Activated CD8-positive, alpha-beta T cell treated with anti-CD3 and anti-CD28 coated beads, Interleukin-2, amount 10 ng/mL, durations not matched to agents 7 days and 5 days (primary cell): ENCODE measurements at regions of chr6 and their contacts with region 1.

Region 1: DNA sequence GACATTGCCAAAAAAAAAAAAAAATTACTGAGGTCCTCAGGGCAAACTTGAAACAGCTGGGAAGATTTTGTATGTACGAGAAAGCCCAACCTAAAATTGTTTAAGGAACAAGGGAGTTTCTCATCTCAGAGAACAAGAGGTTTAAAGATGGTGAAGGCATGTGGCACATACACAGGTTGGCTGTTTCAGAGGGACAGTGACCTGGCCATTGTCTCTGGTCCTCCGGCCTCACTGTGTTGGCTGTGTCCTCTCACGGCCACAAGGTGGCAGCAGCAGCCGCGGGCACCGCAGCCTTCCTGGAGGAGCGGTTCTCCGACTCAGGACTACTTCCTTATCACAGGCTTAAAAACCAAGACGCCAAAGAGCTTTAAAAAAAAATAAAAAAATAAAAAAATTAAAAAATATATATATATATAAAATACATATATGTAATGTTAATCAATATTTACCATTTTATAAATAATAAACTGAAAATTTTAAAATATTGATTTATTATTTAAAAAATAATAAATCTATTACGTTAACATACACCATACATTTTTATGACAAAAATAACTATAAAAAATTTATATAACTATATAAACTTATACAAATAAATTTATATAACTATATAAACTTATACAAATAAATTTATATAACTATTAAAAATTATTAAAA is 52.8 kb downstream of the GTF2H5 start:
- DNase-seq: peak; percentile 82
- ATAC-seq: peak; percentile 94
- H3K4me3 Mint-ChIP-seq: no peak overlapping the region
- H3K27ac Mint-ChIP-seq: no peak overlapping the region
- H3K4me1 Mint-ChIP-seq: peaks cover 6% of the 10 kb centered on the region
- H3K27me3 Mint-ChIP-seq: no peaks in the 10 kb centered on the region

Region 2: GRCh38 chr6:157873735-157874344 is 347.1 kb before region 1 on chr6:
- CTCF ChIA-PET with region 1: no interaction called
- POLR2A ChIA-PET with region 1: no interaction called
- DNase-seq: peak; percentile 91
- ATAC-seq: peak; percentile 89
- H3K4me3 Mint-ChIP-seq: no peak overlapping the region
- H3K27ac Mint-ChIP-seq: no peak overlapping the region
- H3K4me1 Mint-ChIP-seq: peaks cover 15% of the 10 kb centered on the region
- H3K27me3 Mint-ChIP-seq: no peaks in the 10 kb centered on the region

Region 3: DNA sequence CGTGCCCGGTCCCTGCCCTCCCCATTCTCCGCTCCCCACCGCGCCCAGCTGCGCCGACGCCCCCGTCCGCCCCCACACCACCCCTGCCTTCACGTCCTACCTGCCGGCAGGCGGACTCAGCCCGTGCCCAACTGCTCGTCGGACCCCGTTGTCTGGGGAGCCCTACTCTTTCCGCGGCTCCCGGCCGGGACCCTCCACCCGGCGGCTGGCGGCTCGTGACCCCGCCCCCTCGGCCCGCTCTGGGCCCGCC is 52.9 kb before region 1 on chr6 and contains the start of gene SERAC1:
- CTCF ChIA-PET with region 1: no interaction called
- POLR2A ChIA-PET with region 1: no interaction called
- DNase-seq: no peak
- ATAC-seq: peak; percentile 67
- H3K4me3 Mint-ChIP-seq: peak within 1 kb of the TSS; percentile 90
- H3K27ac Mint-ChIP-seq: peak within 1 kb of the TSS; percentile 98
- H3K4me1 Mint-ChIP-seq: peaks cover 16% of the 10 kb centered on the region
- H3K27me3 Mint-ChIP-seq: no peaks in the 10 kb centered on the region
- total RNA-seq, gene SERAC1: 5.2 to 5.7 TPM

Region 4: GRCh38 chr6:158194487-158195280 is 26.2 kb before region 1 on chr6:
- CTCF ChIA-PET with region 1: no interaction called
- POLR2A ChIA-PET with region 1: no interaction called
- DNase-seq: no peak
- ATAC-seq: no peak
- H3K4me3 Mint-ChIP-seq: no peak overlapping the region
- H3K27ac Mint-ChIP-seq: no peak overlapping the region
- H3K4me1 Mint-ChIP-seq: no peaks in the 10 kb centered on the region
- H3K27me3 Mint-ChIP-seq: no peaks in the 10 kb centered on the region

Region 5: GRCh38 chr6:158242071-158242606 is 21.2 kb after region 1 on chr6:
- CTCF ChIA-PET with region 1: interaction called, 10 read pairs
- POLR2A ChIA-PET with region 1: no interaction called
- DNase-seq: no peak
- ATAC-seq: peak; percentile 23
- H3K4me3 Mint-ChIP-seq: no peak overlapping the region
- H3K27ac Mint-ChIP-seq: peak overlapping the region; percentile 69
- H3K4me1 Mint-ChIP-seq: peaks cover 23% of the 10 kb centered on the region
- H3K27me3 Mint-ChIP-seq: no peaks in the 10 kb centered on the region

Region 6: DNA sequence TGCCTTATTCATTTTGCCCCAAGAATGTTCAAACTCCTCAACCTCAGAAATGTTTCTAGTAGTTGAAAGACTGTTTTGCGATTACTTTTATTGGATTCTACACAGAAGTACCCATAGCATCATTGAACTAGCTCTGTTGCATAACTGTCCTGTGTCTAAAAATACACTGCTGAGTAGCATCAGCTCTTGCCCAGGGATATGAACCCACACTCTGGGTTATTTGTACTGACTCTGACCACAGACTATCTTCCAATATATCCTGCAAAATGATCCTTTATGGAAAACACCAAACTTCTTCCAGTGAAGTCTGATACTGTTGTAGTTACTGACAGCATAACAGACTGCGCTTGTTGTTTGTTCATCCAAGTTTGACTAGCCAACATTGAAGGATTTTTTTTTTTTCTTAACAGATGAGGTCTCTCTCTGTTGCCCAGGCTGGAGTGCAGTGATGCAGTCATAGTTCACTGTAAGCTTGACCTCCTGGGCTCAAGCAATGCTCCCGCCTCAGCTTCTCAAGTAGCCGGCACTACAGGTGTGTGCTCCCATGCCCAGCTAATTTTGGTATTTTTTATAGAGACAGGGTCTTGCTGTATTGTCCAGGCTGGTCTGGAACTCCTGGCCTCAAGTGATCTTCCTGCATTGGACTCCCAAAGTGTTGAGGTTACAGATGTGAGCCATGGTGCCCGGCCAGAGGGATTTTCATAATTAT is 141.2 kb after region 1 on chr6:
- CTCF ChIA-PET with region 1: interaction called, 10 read pairs
- POLR2A ChIA-PET with region 1: no interaction called
- DNase-seq: no peak
- ATAC-seq: no peak
- H3K4me3 Mint-ChIP-seq: no peak overlapping the region
- H3K27ac Mint-ChIP-seq: no peak overlapping the region
- H3K4me1 Mint-ChIP-seq: peaks cover 32% of the 10 kb centered on the region
- H3K27me3 Mint-ChIP-seq: no peaks in the 10 kb centered on the region

Region 7: GRCh38 chr6:158417760-158418098 is 196.8 kb after region 1 on chr6:
- CTCF ChIA-PET with region 1: interaction called, 11 read pairs
- POLR2A ChIA-PET with region 1: no interaction called
- DNase-seq: no peak
- ATAC-seq: no peak
- H3K4me3 Mint-ChIP-seq: no peak overlapping the region
- H3K27ac Mint-ChIP-seq: no peak overlapping the region
- H3K4me1 Mint-ChIP-seq: peaks cover 2% of the 10 kb centered on the region
- H3K27me3 Mint-ChIP-seq: no peaks in the 10 kb centered on the region

Region 8: GRCh38 chr6:158595223-158595622 is 374.3 kb after region 1 on chr6:
- CTCF ChIA-PET with region 1: interaction called, 14 read pairs
- POLR2A ChIA-PET with region 1: no interaction called
- DNase-seq: no peak
- ATAC-seq: no peak
- H3K4me3 Mint-ChIP-seq: no peak overlapping the region
- H3K27ac Mint-ChIP-seq: no peak overlapping the region
- H3K4me1 Mint-ChIP-seq: peaks cover 1% of the 10 kb centered on the region
- H3K27me3 Mint-ChIP-seq: no peaks in the 10 kb centered on the region